ENCODE measurements at regions of chr5 and their contacts with region 1.

Region 1: DNA sequence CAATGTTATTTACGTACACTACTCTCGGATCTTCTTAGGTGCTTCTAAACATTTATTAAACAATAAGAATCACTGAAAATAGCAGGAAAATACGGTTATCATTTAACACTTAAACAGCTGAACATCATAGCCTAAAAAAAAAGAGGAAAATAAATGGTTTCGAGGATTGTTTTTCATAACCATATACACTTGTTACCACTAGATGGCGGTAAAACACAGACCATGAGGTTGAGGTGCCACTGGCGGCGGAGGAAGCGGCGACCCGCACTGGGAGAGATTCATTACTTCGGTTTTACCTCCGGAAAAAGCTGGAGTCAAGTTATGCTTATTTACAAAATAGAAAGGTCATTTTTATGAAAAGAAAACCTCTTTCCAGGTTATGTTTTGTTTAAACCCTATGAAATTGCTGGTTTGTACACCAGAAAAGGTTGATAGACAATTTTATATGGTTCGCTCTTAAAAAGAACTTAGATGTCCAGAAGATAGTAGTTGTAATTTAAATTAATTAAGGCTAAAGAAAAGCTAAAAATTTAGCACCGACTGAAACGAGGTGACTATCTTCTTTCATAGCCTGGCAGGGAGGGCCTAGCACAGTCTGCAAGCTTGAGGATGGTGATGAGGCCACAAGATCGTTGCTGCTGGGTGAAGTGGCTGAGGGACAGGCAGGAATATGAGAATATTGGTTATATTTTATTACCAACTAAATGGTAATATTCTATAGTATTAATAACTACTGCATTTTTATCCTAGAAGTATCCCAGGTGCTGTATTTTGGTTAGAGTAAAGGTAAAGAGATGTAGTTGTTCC is 605.7 kb downstream of the RAB3C start:
- DNase-seq: peak; percentile 52
- H3K4me3 ChIP-seq: peak overlapping the region in 1 of 2 experiments; percentile 29; a peak in 3 of 4 replicates
- H3K27ac ChIP-seq: peak overlapping the region in 1 of 2 experiments; percentile 50; a peak in 1 of 4 replicates
- H3K4me1 ChIP-seq: peaks cover 0 to 4% of the 10 kb centered on the region in 2 experiments; a peak in 2 of 4 replicates
- H3K27me3 ChIP-seq: no peaks in the 10 kb centered on the region
- CTCF ChIP-seq: peak; percentile 81
- EP300 ChIP-seq: no peak
- RAD21 ChIP-seq: peak; percentile 97

Region 2: DNA sequence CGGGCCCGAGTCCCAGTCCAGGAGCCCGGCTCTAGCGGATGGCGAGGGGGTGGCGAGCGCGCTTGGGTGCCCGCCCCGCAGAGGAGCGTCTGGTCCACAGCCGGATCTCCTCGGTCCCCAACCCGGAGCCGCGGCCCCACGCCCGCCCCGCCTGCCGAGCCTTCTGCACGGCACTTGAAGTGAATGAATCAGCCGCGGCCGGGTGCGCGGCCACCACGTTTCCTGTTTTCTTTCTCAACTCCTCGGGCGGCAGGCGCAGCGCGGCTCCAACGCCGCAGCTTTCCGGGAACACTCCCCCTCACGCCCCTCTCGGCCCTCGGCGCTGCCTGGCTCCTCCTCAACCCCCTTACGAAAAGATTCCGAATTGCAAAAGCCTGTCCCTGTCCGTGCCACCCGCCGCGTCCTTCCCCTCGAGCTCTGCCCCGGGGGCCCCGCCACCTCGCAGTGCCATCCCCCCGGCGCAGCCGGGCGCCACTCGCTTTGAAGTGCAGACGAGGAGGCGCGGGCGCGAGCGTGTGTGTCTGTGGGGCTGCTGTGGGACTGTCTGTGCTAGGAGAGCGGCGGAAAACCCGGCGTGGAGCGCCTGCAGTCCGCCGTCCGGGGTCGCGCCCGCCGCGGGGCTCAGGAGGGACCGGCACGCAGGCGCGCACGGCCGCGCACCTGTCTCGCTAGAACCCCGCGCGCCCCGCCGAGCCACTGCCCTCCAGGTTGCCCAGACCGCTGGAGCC is 149.2 kb before region 1 on chr5:
- CTCF ChIA-PET with region 1: interaction called, 11 read pairs
- POLR2A ChIA-PET with region 1: no interaction called
- DNase-seq: peak; percentile 87
- H3K4me3 ChIP-seq: peak overlapping the region; percentile 74 to 76
- H3K27ac ChIP-seq: peak overlapping the region; percentile 41 to 50; a peak in 2 of 4 replicates
- H3K4me1 ChIP-seq: peaks cover 26 to 45% of the 10 kb centered on the region in 2 experiments
- H3K27me3 ChIP-seq: no peaks in the 10 kb centered on the region
- CTCF ChIP-seq: no peak
- EP300 ChIP-seq: 0 out of 4 replicates have a peak, but pooled peaks of 1 of the 2 experiments have one; percentile 38
- RAD21 ChIP-seq: no peak

Region 3: GRCh38 chr5:59206132-59206581 is 17.5 kb after region 1 on chr5:
- CTCF ChIA-PET with region 1: interaction called, 50 read pairs
- POLR2A ChIA-PET with region 1: no interaction called
- DNase-seq: no peak
- H3K4me3 ChIP-seq: no peak overlapping the region
- H3K27ac ChIP-seq: peak overlapping the region; percentile 26 to 50; a peak in 3 of 4 replicates
- H3K4me1 ChIP-seq: peaks cover 0 to 19% of the 10 kb centered on the region in 2 experiments; a peak in 2 of 4 replicates
- H3K27me3 ChIP-seq: no peaks in the 10 kb centered on the region
- CTCF ChIP-seq: no peak
- EP300 ChIP-seq: peak; percentile 26 to 74; a peak in 2 of 4 replicates
- RAD21 ChIP-seq: no peak

Region 4: DNA sequence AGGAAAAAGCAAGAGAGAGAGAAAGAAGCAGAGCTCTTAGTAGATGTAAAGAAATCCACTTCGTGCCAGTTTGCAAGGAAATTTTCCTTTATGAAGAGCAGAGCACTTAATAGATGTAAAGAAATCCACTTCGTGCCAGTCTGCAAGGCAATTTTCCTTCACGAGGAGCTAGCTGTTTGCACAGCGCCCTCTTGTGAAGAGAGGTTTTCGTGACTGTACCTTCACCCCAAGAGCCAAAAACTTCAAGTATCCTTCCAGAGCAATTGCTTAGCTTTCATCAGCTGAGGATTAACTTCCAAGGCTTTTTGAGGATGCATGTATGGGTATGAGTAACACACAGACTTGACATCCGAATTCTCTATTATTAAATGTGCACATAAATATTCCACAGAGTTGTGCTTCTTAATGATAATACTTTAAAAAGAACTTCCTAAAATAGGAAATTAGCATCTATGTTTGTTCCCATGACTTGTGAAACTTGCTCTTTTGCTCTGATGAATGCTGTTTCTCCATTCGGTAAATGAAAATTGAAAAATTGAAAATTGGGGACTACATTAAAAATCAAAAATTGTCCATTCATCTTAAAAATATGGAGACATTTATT is 179.3 kb after region 1 on chr5:
- CTCF ChIA-PET with region 1: interaction called, 112 read pairs
- POLR2A ChIA-PET with region 1: interaction called, 5 read pairs
- DNase-seq: peak; percentile 39
- H3K4me3 ChIP-seq: no peak overlapping the region; a peak in 1 of 4 replicates
- H3K27ac ChIP-seq: no peak overlapping the region
- H3K4me1 ChIP-seq: no peaks in the 10 kb centered on the region; a peak in 2 of 4 replicates
- H3K27me3 ChIP-seq: no peaks in the 10 kb centered on the region
- CTCF ChIP-seq: peak; percentile 83
- EP300 ChIP-seq: no peak
- RAD21 ChIP-seq: peak; percentile 89

Region 5: DNA sequence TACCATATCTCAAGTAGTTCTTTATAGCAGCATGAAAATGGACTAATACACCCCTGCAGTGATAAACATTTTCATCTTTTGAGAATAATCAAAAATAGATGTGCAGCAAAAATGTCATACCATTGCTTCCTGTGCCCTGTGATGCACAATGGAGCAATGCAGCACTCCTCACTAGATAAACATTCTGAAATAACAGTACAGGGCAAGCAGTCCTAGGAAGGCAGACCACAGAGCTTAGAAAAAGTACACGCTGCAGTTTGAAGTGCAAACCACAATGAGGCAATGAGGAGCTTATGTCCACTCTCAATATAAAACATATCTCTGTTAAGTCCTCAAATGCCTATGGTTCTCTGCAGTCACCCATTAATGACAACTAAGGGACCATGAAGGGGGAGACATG is 337.3 kb after region 1 on chr5:
- CTCF ChIA-PET with region 1: no interaction called
- POLR2A ChIA-PET with region 1: no interaction called
- DNase-seq: no peak
- H3K4me3 ChIP-seq: no peak overlapping the region
- H3K27ac ChIP-seq: peak overlapping the region in 1 of 2 experiments; percentile 20; a peak in 1 of 4 replicates
- H3K4me1 ChIP-seq: peaks cover 0 to 6% of the 10 kb centered on the region in 2 experiments; a peak in 2 of 4 replicates
- H3K27me3 ChIP-seq: no peaks in the 10 kb centered on the region
- CTCF ChIP-seq: peak; percentile 43
- EP300 ChIP-seq: no peak
- RAD21 ChIP-seq: no peak

Region 6: GRCh38 chr5:59660737-59661136 is 472.1 kb after region 1 on chr5:
- CTCF ChIA-PET with region 1: interaction called, 16 read pairs
- POLR2A ChIA-PET with region 1: no interaction called
- DNase-seq: peak; percentile 21
- H3K4me3 ChIP-seq: no peak overlapping the region
- H3K27ac ChIP-seq: peak overlapping the region in 1 of 2 experiments; percentile 64; a peak in 2 of 4 replicates
- H3K4me1 ChIP-seq: peaks cover 4 to 22% of the 10 kb centered on the region in 2 experiments; a peak in 3 of 4 replicates
- H3K27me3 ChIP-seq: no peaks in the 10 kb centered on the region
- CTCF ChIP-seq: peak; percentile 67
- EP300 ChIP-seq: no peak
- RAD21 ChIP-seq: peak; percentile 77

Region 7: DNA sequence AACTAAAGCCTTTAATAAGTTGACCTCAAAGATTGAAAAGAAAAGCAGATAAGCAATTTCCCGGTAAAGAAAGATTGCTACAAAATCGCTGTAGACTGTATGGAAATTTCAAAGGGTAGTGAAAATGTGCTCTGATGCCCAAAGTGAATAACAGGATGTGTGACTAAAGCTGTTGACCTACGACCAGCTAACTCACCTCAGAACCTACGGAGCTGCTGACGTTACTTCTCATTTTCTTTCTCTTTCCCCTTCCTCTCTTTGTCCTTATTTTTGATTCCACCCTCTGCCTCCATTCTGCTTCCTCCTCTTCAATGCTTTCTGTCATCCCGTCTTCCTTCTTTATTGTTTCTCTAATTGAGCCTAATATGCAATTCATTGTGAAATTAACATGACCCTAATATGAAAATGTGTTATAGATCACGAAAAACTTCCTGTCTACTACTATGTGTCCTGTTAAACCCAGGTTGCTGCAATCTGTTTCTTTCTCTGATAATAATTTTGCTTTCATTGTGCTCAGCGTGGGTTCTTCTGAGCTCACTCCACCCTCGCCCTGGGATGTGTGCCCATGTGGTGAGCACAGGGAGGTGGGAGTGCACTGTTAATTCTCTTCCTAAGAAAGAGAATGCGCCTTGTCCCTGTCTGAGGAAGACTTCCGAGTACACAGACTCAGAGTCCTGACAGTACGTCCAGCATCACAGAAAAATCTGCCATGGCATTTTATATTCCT is 601.9 kb after region 1 on chr5:
- CTCF ChIA-PET with region 1: interaction called, 12 read pairs
- POLR2A ChIA-PET with region 1: no interaction called
- DNase-seq: no peak
- H3K4me3 ChIP-seq: no peak overlapping the region
- H3K27ac ChIP-seq: no peak overlapping the region
- H3K4me1 ChIP-seq: peaks cover 22 to 31% of the 10 kb centered on the region in 2 experiments; a peak in 3 of 4 replicates
- H3K27me3 ChIP-seq: no peaks in the 10 kb centered on the region
- CTCF ChIP-seq: no peak
- EP300 ChIP-seq: no peak
- RAD21 ChIP-seq: no peak

Measured in SK-N-SH (cell line).